Activated naive CD8-positive, alpha-beta T cell treated with anti-CD3 and anti-CD28 coated beads, Interleukin-2, amount 10 ng/mL, durations not matched to agents 7 days and 5 days (primary cell): ENCODE measurements at regions of chr15 and their contacts with region 1.

Region 1: GRCh38 chr15:67101911-67102598 is 36.7 kb downstream of the SMAD3 start:
- DNase-seq: no peak
- ATAC-seq: peak; percentile 73
- H3K4me3 Mint-ChIP-seq: no peak overlapping the region
- H3K27ac Mint-ChIP-seq: no peak overlapping the region
- H3K4me1 Mint-ChIP-seq: peaks cover 57% of the 10 kb centered on the region
- H3K27me3 Mint-ChIP-seq: no peaks in the 10 kb centered on the region

Region 2: DNA sequence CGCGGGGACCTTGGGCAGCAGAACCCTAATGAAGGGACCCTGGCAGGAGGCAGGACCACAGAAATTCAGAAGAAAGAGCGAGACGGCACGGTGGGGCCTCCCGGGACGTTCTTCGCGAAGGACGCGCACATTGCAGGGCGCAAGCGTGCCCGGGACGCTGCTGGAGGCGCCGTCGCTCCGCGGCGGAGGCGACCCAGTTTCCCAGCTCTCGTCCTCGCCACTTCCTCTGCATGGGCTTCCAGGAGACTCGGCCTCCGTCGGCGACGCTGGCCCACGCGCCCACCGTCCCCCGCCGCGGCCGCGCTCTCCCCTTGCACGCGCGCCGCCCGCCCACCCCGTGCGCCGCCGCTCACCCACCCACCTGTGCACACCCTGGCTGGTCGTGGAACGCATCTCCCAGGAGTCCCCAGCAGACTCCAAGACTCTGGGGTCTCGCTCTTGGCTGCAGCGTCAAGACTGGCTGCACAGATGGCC is 68.4 kb before region 1 on chr15:
- POLR2A ChIA-PET with region 1: no interaction called
- DNase-seq: peak; percentile 46
- ATAC-seq: no peak
- H3K4me3 Mint-ChIP-seq: peak overlapping the region; percentile 41
- H3K27ac Mint-ChIP-seq: no peak overlapping the region
- H3K4me1 Mint-ChIP-seq: peaks cover 12% of the 10 kb centered on the region
- H3K27me3 Mint-ChIP-seq: peaks cover 13% of the 10 kb centered on the region

Region 3: GRCh38 chr15:67065444-67066093 is 36.5 kb before region 1 on chr15 and contains the start of gene SMAD3:
- POLR2A ChIA-PET with region 1: interaction called, 36 read pairs
- DNase-seq: peak; percentile 79
- ATAC-seq: peak; percentile 56
- H3K4me3 Mint-ChIP-seq: peak within 1 kb of the TSS; percentile 97
- H3K27ac Mint-ChIP-seq: peak within 1 kb of the TSS; percentile 89
- H3K4me1 Mint-ChIP-seq: peaks cover 31% of the 10 kb centered on the region
- H3K27me3 Mint-ChIP-seq: peaks cover 22% of the 10 kb centered on the region
- total RNA-seq, gene SMAD3: 74.1 to 75.9 TPM

Region 4: DNA sequence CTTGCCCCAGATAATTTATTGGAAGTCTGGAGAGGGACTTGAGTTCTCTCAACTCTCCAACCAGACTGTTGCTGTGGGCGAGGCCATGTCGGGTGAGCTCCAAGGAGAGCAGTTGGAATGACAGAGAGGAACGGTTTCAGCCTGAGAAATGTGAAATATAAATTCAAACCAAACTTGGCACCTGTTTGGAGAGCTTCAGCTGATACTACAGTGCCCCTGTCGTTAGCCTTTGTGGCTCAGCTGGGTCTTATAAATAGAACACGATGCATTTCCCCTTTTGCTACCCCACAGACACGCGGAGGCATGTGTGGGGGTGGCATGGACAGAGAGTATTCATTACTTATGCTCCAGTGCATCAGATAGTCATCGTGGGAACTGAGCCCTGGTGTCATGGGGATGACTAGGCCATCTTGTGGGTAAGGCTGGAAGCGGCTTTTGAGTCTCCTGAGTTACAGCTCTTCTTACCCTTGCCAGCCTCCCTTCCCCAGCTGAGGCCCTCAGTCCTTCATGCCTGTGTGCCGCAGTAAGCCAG is 21.1 kb before region 1 on chr15:
- POLR2A ChIA-PET with region 1: interaction called, 12 read pairs
- DNase-seq: no peak
- ATAC-seq: no peak
- H3K4me3 Mint-ChIP-seq: no peak overlapping the region
- H3K27ac Mint-ChIP-seq: no peak overlapping the region
- H3K4me1 Mint-ChIP-seq: peaks cover 60% of the 10 kb centered on the region
- H3K27me3 Mint-ChIP-seq: peaks cover 2% of the 10 kb centered on the region

Region 5: GRCh38 chr15:67091071-67091979 is 10.7 kb before region 1 on chr15:
- POLR2A ChIA-PET with region 1: interaction called, 13 read pairs
- DNase-seq: peak; percentile 67
- ATAC-seq: peak; percentile 81
- H3K4me3 Mint-ChIP-seq: peak overlapping the region; percentile 66
- H3K27ac Mint-ChIP-seq: peak overlapping the region; percentile 64
- H3K4me1 Mint-ChIP-seq: peaks cover 73% of the 10 kb centered on the region
- H3K27me3 Mint-ChIP-seq: peaks cover 4% of the 10 kb centered on the region

Region 6: GRCh38 chr15:67134067-67134838 is 32.2 kb after region 1 on chr15:
- POLR2A ChIA-PET with region 1: interaction called, 19 read pairs
- DNase-seq: peak; percentile 58
- ATAC-seq: peak; percentile 97
- H3K4me3 Mint-ChIP-seq: peak overlapping the region; percentile 86
- H3K27ac Mint-ChIP-seq: peak overlapping the region; percentile 98
- H3K4me1 Mint-ChIP-seq: peaks cover 58% of the 10 kb centered on the region
- H3K27me3 Mint-ChIP-seq: no peaks in the 10 kb centered on the region